ENCODE measurements at regions of chr1 and their contacts with region 1.

Region 1: DNA sequence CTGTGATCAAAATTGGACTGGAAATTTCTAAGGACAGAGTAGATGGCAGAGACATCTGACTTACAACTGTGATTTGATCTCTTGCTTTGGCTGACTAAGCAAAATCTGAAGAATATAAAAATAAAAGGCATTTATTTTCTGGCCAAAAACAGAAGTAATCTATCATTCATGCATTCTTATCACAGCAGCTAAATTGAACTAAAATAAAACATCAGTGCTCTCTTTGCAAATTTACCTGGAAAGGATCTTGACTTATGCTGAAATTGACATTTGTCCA is 81.4 kb upstream of the ZNF678 start:
- DNase-seq: no peak
- CTCF ChIP-seq: no peak

Region 2: DNA sequence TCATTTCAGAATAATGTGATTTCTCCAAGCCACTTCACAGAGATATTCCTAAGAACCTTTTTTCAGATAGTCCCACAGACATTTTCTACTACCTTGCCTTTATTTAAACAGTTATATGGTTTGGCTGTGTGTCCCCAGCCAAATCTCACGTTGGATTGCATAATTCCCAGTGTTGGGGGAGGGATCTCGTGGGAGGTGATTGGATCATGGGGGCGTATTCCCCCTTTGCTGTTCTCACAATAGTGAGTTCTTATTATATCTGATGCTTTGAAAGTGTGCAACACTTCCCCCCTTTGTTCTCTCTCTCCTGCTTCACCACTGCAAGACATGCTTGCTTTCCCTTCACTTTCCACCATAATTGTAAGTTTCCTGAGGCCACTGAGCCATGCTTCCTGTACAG is 12.3 kb before region 1 on chr1:
- CTCF ChIA-PET with region 1: interaction called, 14 read pairs
- POLR2A ChIA-PET with region 1: no interaction called
- DNase-seq: no peak
- CTCF ChIP-seq: no peak

Measured in GM10248 (cell line).